Activated naive CD4-positive, alpha-beta T cell treated with anti-CD3 and anti-CD28 coated beads for 36 hours (primary cell): ENCODE measurements at regions of chr16 and their contacts with region 1.

Region 1: GRCh38 chr16:10957771-10958486 is 13.6 kb downstream of the CLEC16A start:
- DNase-seq: peak; percentile 57
- H3K4me3 Mint-ChIP-seq: no peak overlapping the region
- H3K27ac Mint-ChIP-seq: peak overlapping the region; percentile 82
- H3K4me1 Mint-ChIP-seq: peaks cover 37% of the 10 kb centered on the region
- H3K27me3 Mint-ChIP-seq: no peaks in the 10 kb centered on the region

Region 2: GRCh38 chr16:10944249-10945064 is 13.5 kb before region 1 on chr16 and contains the start of gene CLEC16A:
- CTCF ChIA-PET with region 1: interaction called, 31 read pairs
- intact Hi-C with region 1: no loop called
- DNase-seq: peak; percentile 97
- H3K4me3 Mint-ChIP-seq: peak within 1 kb of the TSS; percentile 81
- H3K27ac Mint-ChIP-seq: peak within 1 kb of the TSS; percentile 70
- H3K4me1 Mint-ChIP-seq: peaks cover 61% of the 10 kb centered on the region
- H3K27me3 Mint-ChIP-seq: no peaks in the 10 kb centered on the region
- total RNA-seq, gene CLEC16A: 18.4 to 20.1 TPM

Region 3: DNA sequence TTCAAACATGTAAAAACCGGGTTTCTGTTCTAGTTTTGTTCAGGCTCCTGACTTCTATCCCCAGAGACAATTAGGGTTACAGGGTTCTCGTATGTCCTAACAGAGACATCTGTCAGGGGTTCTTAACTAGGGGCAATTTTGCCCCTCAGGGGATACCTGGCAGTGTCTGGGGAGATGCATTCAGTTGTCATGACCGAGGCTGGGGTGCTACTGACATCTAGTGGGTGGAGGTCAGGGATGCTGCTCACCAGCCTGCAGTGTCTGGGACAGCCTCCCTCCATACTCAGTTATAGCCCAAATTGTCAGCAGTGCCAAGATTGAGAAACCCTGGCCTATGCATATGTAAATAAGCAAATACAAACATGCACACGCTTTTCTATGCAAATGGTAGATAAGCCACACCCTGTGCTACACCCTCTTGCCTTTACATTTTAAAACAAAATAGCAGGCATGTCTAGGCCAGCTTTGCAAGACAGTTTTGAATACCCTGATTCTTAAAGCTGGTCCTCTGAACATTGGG is 23.8 kb after region 1 on chr16:
- CTCF ChIA-PET with region 1: interaction called, 31 read pairs
- intact Hi-C with region 1: loop called (anchors 1 kb)
- DNase-seq: peak; percentile 76
- H3K4me3 Mint-ChIP-seq: no peak overlapping the region
- H3K27ac Mint-ChIP-seq: no peak overlapping the region
- H3K4me1 Mint-ChIP-seq: peaks cover 36% of the 10 kb centered on the region
- H3K27me3 Mint-ChIP-seq: no peaks in the 10 kb centered on the region